ENCODE measurements at regions of chr10 and their contacts with region 1.

Region 1: GRCh38 chr10:119416855-119417254 is 125.7 kb downstream of the RGS10 start:
- DNase-seq: peak; percentile 71
- H3K4me3 ChIP-seq: no peak overlapping the region
- H3K27ac ChIP-seq: no peak overlapping the region
- H3K4me1 ChIP-seq: peaks cover 9 to 18% (median 16%) of the 10 kb centered on the region in 4 donors
- H3K27me3 ChIP-seq: no peaks in the 10 kb centered on the region
- CTCF ChIP-seq: peak; percentile 70 to 77 (median 72)
- EP300 ChIP-seq: no peak
- POLR2A ChIP-seq: no peak

Region 2: DNA sequence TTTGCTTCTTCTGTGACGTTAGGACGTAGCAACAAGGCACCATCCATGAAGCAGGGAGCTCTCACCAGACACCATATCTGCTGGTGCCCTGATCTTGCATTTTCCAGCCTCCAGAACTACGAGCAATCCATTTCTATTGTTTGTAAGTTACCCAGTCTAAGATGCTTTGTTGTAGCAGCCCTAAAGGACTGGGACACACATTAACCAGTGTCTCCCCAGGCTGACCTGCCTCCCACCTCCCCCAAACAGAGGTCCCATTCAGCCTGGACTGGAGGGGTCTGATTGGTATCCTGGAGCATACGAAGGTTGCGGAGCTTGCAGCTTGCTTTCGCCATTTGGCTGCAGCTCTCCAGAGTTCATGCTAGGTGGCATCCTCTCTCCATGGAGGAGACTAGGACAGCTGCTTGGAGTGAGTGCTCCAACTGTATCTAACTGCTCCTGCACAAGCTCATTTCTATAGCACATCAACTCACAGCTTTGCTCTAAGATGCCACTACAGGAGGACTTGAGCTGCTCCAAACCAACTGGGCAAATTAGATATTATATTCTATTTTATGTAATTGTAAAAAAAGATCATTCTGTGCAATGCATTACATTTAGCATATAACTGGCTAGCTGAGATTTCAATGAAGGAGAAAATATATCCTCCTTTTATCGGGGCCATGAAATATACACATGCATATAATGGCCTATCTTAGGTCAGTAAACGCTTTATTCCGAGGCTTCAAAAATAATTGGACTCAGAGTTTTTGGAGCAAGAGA is 217.4 kb before region 1 on chr10:
- in situ Hi-C with region 1: loop called (anchors 10 kb)
- intact Hi-C with region 1: no loop called
- DNase-seq: peak; percentile 63
- H3K4me3 ChIP-seq: no peak overlapping the region
- H3K27ac ChIP-seq: no peak overlapping the region
- H3K4me1 ChIP-seq: peaks cover 0 to 2% (median 0%) of the 10 kb centered on the region in 4 donors
- H3K27me3 ChIP-seq: peaks cover 4% of the 10 kb centered on the region
- CTCF ChIP-seq: peak; percentile 68 to 77 (median 74)
- EP300 ChIP-seq: no peak
- POLR2A ChIP-seq: no peak